ENCODE measurements at regions of chr4 and their contacts with region 1.

Region 1: DNA sequence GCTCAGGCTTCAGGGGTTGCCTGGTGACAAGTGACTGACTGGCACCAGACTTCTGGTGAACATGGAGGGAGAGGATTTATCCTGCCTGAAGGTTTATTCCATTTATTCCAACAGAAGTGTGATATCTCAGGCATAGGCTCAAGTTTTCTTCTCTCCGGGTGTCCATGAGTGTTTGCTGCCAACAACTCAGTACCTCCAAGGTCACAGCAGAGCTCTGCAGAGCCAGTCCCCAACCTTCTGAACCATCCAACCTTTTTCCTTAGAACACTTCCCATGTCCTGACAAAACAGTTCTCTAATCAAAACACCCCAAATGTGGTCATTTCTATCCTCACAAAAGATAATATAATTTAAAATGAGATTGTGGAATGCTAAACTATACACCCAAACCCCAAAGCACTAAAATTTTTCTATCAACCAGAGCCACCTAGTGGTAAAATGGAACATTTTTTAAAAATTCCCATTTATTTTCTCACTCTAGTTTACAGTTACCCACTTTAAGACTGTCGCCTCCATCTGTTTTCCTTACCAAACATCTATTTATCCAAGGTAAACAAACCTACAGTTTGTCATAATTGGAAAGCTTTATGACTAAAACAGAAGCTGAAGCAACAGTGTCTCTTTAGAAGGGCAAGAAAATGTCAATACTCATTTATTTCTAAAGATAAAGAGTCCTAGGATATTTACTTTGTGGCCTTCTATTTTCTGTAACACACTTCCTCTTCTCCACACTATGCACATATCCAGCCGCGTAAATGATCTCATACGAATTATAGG is 39.6 kb downstream of the TMEM154 start:
- DNase-seq: no peak
- ATAC-seq: no peak
- H3K4me3 ChIP-seq: no peak overlapping the region
- H3K27ac ChIP-seq: no peak overlapping the region
- H3K4me1 ChIP-seq: no peaks in the 10 kb centered on the region
- H3K27me3 ChIP-seq: no peaks in the 10 kb centered on the region
- CTCF ChIP-seq: peak; percentile 30 to 63 (median 49)
- POLR2A ChIP-seq: no peak

Region 2: GRCh38 chr4:152735396-152735859 is 95.2 kb after region 1 on chr4:
- in situ Hi-C with region 1: no loop called
- intact Hi-C with region 1: loop called (anchors 5 kb)
- DNase-seq: no peak
- ATAC-seq: no peak
- H3K4me3 ChIP-seq: no peak overlapping the region
- H3K27ac ChIP-seq: no peak overlapping the region
- H3K4me1 ChIP-seq: no peaks in the 10 kb centered on the region
- H3K27me3 ChIP-seq: no peaks in the 10 kb centered on the region
- CTCF ChIP-seq: peak in 4 of 5 experiments; percentile 34 to 66 (median 45)
- POLR2A ChIP-seq: no peak

Measured in gastrocnemius medialis (tissue), 4 donors.